Caco-2 (cell line): ENCODE measurements at regions of chr15 and their contacts with region 1.

Region 1: DNA sequence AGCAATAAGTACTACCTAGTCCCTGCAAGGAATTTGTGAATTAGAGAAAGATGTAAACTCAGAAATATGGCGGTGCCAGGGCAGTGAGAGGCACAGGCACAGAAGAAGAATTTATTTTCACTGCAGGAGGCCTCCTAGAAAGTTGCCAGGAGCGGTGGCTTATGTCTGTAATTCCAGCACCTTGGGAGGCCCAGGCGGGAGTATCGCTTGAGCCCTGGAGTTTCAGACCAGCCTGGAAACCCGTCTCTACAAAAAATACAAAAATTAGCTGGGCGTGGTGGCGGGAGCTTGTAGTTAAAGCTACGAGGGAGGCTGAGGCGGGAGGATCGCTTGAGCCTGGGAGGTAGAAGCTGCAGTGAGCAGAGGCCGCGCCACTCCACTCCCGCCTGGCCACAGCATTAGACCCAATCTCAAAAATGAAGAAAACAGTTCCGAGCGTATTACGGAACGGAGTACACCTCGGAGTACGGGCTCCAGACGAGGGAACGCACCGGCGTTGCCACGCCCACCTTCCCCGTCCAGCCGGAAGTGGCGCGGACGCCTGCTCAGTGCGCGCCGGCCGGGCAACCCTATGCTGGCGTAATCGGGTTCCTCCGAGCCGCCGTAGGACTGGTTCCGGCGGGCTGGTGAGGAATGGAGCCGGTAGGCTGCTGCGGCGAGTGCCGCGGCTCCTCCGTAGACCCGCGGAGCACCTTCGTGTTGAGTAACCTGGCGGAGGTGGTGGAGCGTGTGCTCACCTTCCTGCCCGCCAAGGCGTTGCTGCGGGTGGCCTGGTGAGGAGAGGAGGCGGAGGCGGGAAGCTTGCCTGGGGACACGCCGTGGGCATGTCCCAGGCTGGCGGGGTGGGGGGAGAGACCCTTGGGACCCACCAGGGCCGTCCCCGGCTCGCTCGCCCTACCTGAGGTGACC is at the start of gene FBXO22:
- DNase-seq: peak; percentile 89 to 94
- H3K4me3 ChIP-seq: peak within 1 kb of the TSS; percentile 83
- H3K4me3 Mint-ChIP-seq: peak within 1 kb of the TSS; percentile 99
- H3K27ac Mint-ChIP-seq: peak within 1 kb of the TSS; percentile 98
- H3K4me1 ChIP-seq: peaks cover 17% of the 10 kb centered on the region
- H3K4me1 Mint-ChIP-seq: peaks cover 10% of the 10 kb centered on the region
- H3K27me3 ChIP-seq: no peaks in the 10 kb centered on the region
- H3K27me3 Mint-ChIP-seq: no peaks in the 10 kb centered on the region
- CTCF ChIP-seq: no peak
- total RNA-seq, gene FBXO22: 43.9 and 47.7 TPM in 2 replicates

Region 2: DNA sequence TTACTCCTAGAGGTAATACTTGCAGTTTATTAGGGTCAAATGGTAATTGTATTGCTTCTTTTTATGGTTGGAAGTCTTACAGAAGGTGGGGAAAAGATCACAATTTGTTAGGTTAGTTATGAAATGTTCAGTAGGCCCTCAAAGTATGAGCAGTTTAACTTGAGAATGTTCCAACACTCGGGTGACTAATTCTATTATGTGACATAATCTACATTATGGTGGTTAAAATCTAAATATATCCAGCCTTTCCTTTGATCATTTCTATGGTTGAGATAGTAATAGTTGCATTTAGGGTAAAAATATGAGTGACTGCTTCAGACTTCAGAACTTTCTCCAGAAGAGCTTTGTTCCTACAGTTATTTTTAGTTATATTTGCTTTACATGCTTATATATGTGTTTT is 19.5 kb before region 1 on chr15:
- CTCF ChIA-PET with region 1: no interaction called
- POLR2A ChIA-PET with region 1: interaction called, 3 read pairs
- intact Hi-C with region 1: loop called (anchors 2 kb)
- DNase-seq: no peak
- H3K4me3 ChIP-seq: no peak overlapping the region
- H3K4me3 Mint-ChIP-seq: no peak overlapping the region
- H3K27ac Mint-ChIP-seq: no peak overlapping the region
- H3K4me1 ChIP-seq: peaks cover 27% of the 10 kb centered on the region
- H3K4me1 Mint-ChIP-seq: peaks cover 11% of the 10 kb centered on the region
- H3K27me3 ChIP-seq: no peaks in the 10 kb centered on the region
- H3K27me3 Mint-ChIP-seq: no peaks in the 10 kb centered on the region
- CTCF ChIP-seq: no peak

Region 3: DNA sequence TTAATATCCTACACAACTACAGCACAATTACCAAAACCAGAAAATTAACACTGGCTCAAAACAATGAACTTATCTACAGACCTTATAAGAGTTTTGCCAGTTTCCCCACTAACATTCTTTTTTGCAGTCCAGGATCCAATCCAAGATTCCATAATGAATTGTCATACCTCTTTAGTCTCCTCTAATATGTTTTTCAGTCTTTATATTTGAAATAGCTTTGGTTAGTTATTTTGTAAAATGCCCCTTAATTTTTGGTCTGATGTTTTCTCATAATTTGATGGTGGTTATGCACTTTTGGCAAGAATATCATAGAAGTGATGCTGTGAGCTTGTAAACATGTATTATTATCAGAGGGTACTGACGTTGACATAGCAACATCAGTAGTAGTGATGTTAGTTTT is 557.3 kb after region 1 on chr15:
- CTCF ChIA-PET with region 1: no interaction called
- POLR2A ChIA-PET with region 1: no interaction called
- intact Hi-C with region 1: no loop called
- DNase-seq: no peak
- H3K4me3 ChIP-seq: no peak overlapping the region
- H3K4me3 Mint-ChIP-seq: no peak overlapping the region
- H3K27ac Mint-ChIP-seq: no peak overlapping the region
- H3K4me1 ChIP-seq: no peaks in the 10 kb centered on the region
- H3K4me1 Mint-ChIP-seq: no peaks in the 10 kb centered on the region
- H3K27me3 ChIP-seq: no peaks in the 10 kb centered on the region
- H3K27me3 Mint-ChIP-seq: no peaks in the 10 kb centered on the region
- CTCF ChIP-seq: no peak